Ovary (tissue), 10 donors: ENCODE measurements at regions of chr4 and their contacts with region 1.

Region 1: DNA sequence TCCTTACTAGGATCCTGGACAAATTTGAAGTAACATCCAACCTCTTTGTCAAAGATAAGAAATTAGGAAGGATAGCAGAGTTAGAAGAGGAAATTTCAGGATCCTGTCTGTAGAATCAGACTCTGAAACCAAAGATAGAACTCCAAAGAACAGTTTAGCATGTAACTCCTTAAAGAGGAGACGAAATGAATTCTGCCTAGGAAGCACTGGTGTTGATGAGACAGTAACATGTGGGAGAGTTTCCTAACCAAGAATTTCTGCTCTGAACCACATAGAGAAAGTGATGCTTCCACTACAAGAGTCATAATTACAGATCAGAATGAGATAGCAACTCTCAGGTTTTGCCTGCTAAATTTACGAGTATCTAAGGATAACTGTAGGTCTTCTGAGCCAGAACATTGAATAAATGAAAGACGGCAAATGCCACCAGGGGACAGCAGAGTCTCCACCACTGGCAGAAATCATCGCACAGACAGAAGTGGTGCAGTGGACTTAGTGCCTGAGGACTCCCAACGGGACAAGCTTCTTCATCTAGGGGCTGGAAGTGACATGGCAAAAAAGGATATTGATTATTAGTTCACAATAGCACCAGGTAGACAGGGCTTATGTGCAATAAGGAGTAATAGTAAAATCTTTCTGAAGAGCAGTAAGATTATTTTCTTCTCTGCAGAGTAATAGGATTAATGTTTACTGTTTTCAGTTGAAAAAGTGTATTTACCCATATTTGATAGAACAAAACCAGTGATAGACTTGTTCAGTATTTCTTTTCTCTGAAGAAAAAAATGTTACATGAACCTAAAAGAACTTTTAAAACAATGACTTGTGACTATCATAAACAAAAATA is 6.7 kb upstream of the PPID start:
- DNase-seq: peak; percentile 37 to 63 (median 52)
- H3K4me3 ChIP-seq: no peak overlapping the region
- H3K27ac ChIP-seq: no peak overlapping the region
- H3K4me1 ChIP-seq: no peaks in the 10 kb centered on the region
- H3K27me3 ChIP-seq: no peaks in the 10 kb centered on the region
- CTCF ChIP-seq: peak; percentile 61 to 83 (median 77)
- EP300 ChIP-seq: no peak
- POLR2A ChIP-seq: no peak

Region 2: DNA sequence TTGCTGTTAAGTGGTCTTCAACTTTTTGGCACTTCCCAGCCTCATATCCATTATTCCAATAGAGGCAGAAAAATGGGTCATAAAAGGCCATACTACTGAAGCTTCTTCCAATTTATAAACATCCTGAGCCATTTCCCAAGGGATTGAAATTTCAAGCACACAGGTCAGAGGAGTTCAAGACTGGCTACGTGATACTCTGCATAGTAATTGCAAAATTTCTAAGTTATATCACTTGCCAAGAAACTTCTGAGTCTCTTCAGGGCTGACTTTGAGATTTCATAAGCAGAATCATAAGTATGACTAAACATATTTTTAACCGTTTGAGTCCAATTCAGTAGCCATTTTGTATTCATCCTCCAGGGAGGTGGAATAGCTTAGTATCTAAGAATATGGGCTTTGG is 283.8 kb before region 1 on chr4:
- intact Hi-C with region 1: no loop called
- DNase-seq: no peak
- H3K4me3 ChIP-seq: no peak overlapping the region
- H3K27ac ChIP-seq: no peak overlapping the region
- H3K4me1 ChIP-seq: no peaks in the 10 kb centered on the region
- H3K27me3 ChIP-seq: no peaks in the 10 kb centered on the region
- CTCF ChIP-seq: no peak
- EP300 ChIP-seq: no peak
- POLR2A ChIP-seq: no peak

Region 3: DNA sequence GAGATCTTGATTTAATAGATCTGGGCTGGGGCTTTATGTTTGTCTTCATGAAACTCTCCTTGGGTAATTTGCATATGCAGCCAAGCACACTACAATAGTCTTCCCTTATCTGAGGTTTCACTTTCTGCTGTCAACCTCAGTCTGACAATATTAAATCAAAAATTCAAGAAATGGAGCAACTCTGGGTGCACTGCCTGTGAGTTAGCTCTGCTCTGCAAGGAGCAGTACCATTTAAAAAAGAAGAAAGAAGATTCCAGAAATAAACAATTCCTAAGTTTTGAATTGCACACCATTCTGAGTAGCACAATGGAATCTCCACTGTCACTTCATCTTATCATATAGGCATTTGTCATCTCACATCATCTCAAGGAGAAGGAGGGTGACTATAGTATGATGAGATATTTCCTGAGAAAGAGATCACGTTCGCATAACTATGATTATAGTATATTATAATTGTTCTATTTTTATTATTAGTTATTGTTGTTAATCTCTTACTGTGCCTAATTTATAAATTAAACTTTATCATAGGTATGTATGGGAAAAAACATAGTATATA is 48.3 kb after region 1 on chr4:
- intact Hi-C with region 1: no loop called
- DNase-seq: no peak
- H3K4me3 ChIP-seq: no peak overlapping the region
- H3K27ac ChIP-seq: no peak overlapping the region
- H3K4me1 ChIP-seq: peaks cover 3% of the 10 kb centered on the region
- H3K27me3 ChIP-seq: no peaks in the 10 kb centered on the region
- CTCF ChIP-seq: no peak
- EP300 ChIP-seq: no peak
- POLR2A ChIP-seq: no peak

Region 4: DNA sequence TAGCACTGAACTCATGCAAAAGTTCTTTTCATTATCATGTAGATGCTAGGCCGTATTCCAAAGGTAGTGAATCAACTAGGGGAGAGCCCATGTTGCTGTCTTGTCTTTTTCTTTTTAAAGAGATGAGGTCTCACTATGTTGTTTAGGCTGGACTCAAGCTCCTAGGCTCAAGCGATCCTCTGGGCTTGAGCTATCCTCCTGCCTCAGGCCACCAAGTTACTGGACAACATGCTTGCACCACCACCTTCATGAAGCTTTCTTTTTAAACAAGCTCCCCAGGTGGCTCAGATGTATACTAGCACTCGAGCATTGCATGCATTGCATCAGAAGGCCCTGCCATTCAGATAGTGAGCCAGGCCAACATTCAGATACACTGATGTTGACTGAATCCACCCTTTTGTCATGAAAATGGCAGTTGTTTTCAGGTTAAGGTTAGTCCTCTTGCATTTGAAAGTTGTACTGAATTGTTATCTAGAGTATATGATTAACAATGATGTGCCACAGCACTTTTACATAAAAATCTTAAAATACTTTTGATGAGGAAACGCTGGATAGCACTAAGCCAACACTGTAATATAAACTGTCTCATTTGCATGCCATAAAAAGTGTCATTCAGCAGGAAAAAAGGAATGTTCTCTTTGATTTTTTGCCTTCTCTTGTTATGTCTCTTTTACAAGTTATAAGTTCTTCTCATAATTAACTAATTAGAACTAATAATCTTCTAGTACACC is 115.5 kb after region 1 on chr4:
- intact Hi-C with region 1: loop called (anchors 5 to 10 kb)
- DNase-seq: no peak
- H3K4me3 ChIP-seq: no peak overlapping the region
- H3K27ac ChIP-seq: no peak overlapping the region
- H3K4me1 ChIP-seq: no peaks in the 10 kb centered on the region
- H3K27me3 ChIP-seq: no peaks in the 10 kb centered on the region
- CTCF ChIP-seq: no peak
- EP300 ChIP-seq: no peak
- POLR2A ChIP-seq: no peak

Region 5: GRCh38 chr4:158850800-158851644 is 121.1 kb after region 1 on chr4:
- intact Hi-C with region 1: loop called (anchors 5 to 10 kb)
- DNase-seq: no peak
- H3K4me3 ChIP-seq: no peak overlapping the region
- H3K27ac ChIP-seq: no peak overlapping the region
- H3K4me1 ChIP-seq: no peaks in the 10 kb centered on the region
- H3K27me3 ChIP-seq: no peaks in the 10 kb centered on the region
- CTCF ChIP-seq: peak in 2 of 3 donors; percentile 26 to 63
- EP300 ChIP-seq: no peak
- POLR2A ChIP-seq: no peak

Region 6: DNA sequence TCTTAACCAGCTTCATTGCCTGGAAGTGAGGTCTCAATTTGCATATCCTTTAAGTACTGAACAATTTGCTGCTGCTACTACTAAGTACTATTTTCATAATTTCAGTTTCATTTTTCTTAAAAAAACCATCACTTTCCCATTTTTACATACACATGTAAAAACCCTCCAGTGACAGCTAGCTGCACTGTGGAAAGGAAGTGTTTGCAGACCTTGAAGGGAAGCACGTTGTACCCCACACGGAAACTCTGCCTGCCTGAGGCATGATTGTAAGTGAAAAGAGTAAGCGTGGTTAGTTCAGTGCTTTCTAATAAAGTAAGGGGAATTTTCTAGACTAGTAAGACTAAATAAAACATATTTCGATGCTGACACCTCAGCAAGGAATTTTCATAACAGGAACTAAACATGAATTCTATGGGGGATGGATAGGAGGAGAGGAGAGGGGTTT is 476.5 kb after region 1 on chr4:
- intact Hi-C with region 1: loop called in 3 of 4 experiments (anchors 10 kb)
- DNase-seq: no peak
- H3K4me3 ChIP-seq: no peak overlapping the region
- H3K27ac ChIP-seq: no peak overlapping the region
- H3K4me1 ChIP-seq: peaks cover 5% of the 10 kb centered on the region
- H3K27me3 ChIP-seq: no peaks in the 10 kb centered on the region
- CTCF ChIP-seq: no peak
- EP300 ChIP-seq: no peak
- POLR2A ChIP-seq: no peak

Region 7: GRCh38 chr4:159829184-159829583 is 1099.2 kb after region 1 on chr4:
- intact Hi-C with region 1: no loop called
- DNase-seq: no peak
- H3K4me3 ChIP-seq: no peak overlapping the region
- H3K27ac ChIP-seq: no peak overlapping the region
- H3K4me1 ChIP-seq: no peaks in the 10 kb centered on the region
- H3K27me3 ChIP-seq: no peaks in the 10 kb centered on the region
- CTCF ChIP-seq: no peak
- EP300 ChIP-seq: no peak
- POLR2A ChIP-seq: no peak